Transverse colon (tissue), 4 donors: ENCODE measurements at regions of chr4 and their contacts with region 1.

Region 1: GRCh38 chr4:4256799-4257198 is 8.8 kb upstream of the TMEM128 start:
- DNase-seq: no peak
- H3K4me3 ChIP-seq: no peak overlapping the region
- H3K27ac ChIP-seq: no peak overlapping the region
- H3K4me1 ChIP-seq: peaks cover 0 to 10% (median 0%) of the 10 kb centered on the region in 4 donors
- H3K27me3 ChIP-seq: no peaks in the 10 kb centered on the region
- CTCF ChIP-seq: no peak
- EP300 ChIP-seq: no peak
- POLR2A ChIP-seq: no peak

Region 2: DNA sequence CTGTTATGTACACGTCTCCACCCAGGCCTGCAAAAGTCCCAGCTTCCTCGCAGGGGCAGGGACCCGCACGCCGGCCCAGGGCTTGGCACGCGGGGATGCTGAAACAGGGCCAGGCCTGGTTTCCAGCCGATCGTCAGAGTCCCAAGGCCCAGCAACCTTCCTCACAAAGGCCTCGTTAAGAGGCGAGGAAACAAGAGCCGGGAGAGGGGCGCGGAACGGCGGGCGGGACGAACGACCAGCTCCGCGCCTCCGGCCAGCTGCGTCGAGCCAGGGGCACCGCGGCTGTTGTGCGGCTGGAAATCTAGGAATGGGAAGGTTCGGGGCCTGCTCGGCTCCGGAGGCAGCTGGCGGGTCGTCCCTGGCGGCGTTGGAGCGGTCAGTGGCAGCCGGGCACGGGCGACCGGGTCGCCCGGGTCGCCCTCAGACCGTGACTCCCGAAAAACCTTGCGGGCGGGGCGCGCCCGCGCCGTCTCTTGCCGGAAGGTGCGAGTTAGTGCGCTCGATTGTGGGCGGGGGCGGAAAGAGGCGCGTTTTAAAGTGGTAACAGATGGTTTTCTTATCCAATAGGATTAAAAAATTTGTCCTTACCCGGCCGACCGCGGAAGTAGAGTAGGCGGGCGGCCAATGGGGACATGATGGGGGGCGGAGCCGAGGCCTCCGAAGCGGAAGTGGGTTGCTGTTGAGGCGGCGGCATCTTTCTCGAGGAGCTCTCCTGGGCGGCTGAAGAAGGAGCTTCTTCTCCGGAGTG is 1788.2 kb before region 1 on chr4 and contains the start of gene RNF4:
- in situ Hi-C with region 1: no loop called
- intact Hi-C with region 1: no loop called
- DNase-seq: peak; percentile 98
- H3K4me3 ChIP-seq: peak within 1 kb of the TSS; percentile 81 to 99 (median 96)
- H3K27ac ChIP-seq: peak within 1 kb of the TSS; percentile 97 to 99 (median 98)
- H3K4me1 ChIP-seq: peaks cover 11 to 33% (median 26%) of the 10 kb centered on the region in 4 donors
- H3K27me3 ChIP-seq: no peaks in the 10 kb centered on the region
- CTCF ChIP-seq: peak in 1 of 5 experiments; percentile 8
- EP300 ChIP-seq: no peak
- POLR2A ChIP-seq: peak; percentile 87
- total RNA-seq, gene RNF4: 20.9 to 50.5 (median 35.8) TPM

Region 3: DNA sequence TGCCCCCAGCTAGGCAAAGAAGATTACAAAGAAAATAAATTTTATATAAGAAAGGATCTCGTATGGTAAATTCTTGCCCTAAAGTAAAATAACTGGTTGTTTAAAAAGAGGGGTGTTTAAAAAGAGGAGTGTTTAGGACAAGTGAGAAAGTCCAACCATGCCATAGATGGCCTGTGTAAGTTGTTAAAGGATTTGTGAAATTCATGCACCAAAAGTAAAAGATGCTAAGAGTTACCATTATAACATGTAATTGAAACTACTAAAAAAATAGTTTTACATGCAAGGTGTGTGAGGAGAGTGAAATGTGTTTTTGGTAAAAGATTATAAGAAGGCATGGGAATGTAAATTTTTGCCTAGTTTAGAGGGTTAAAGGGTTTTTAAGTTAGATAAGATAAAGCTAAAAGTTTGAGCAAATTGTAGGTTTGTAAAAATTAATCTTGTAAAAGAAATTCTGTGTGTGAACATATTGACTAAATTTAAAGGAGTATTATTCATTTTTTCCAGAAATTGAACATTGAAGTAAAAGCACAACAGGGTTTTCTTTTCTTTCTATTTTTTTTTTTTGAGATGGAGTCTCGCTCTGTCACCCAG is 1202.5 kb before region 1 on chr4:
- in situ Hi-C with region 1: no loop called
- intact Hi-C with region 1: no loop called
- DNase-seq: no peak
- H3K4me3 ChIP-seq: no peak overlapping the region
- H3K27ac ChIP-seq: no peak overlapping the region
- H3K4me1 ChIP-seq: no peaks in the 10 kb centered on the region
- H3K27me3 ChIP-seq: no peaks in the 10 kb centered on the region
- CTCF ChIP-seq: no peak
- EP300 ChIP-seq: no peak
- POLR2A ChIP-seq: no peak

Region 4: GRCh38 chr4:4170596-4171150 is 86.1 kb before region 1 on chr4:
- in situ Hi-C with region 1: no loop called
- intact Hi-C with region 1: no loop called
- DNase-seq: no peak
- H3K4me3 ChIP-seq: no peak overlapping the region
- H3K27ac ChIP-seq: no peak overlapping the region
- H3K4me1 ChIP-seq: no peaks in the 10 kb centered on the region
- H3K27me3 ChIP-seq: no peaks in the 10 kb centered on the region
- CTCF ChIP-seq: no peak
- EP300 ChIP-seq: no peak
- POLR2A ChIP-seq: no peak

Region 5: DNA sequence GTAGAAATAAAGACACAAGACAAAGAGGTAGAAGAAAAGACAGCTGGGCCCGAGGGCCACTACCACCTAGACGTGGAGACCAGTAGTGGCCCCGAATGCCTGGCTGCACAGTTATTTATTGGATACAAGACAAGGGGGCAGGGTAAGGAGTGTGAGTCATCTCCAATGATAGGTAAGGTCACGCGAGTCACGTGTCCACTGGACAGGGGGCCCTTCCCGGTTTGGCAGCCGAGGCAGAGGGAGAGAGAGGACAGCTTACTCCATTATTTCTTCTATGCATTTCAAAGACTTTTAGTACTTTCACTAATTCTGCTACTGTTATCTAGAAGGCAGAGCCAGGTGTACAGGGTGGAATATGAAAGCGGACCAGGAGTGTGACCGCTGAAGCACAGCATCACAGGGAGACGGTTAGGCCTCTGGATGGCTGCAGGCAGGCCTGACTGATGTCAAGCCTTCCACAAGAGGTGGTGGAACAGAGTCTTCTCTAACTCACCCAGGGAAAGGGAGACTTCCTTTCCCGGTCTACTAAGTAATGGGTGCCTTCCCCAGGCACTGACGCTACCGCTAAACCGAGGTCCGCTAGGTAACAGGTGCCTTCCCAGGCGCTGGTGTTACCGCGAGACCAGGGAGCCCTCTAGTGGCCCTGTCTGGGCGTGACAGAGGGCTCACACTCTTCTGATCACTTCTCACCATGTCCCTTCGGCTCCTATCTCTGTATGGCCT is 78.2 kb after region 1 on chr4:
- in situ Hi-C with region 1: loop called in 3 of 4 experiments (anchors 10 kb)
- intact Hi-C with region 1: no loop called
- DNase-seq: peak; percentile 75
- H3K4me3 ChIP-seq: no peak overlapping the region
- H3K27ac ChIP-seq: no peak overlapping the region
- H3K4me1 ChIP-seq: no peaks in the 10 kb centered on the region
- H3K27me3 ChIP-seq: no peaks in the 10 kb centered on the region
- CTCF ChIP-seq: peak; percentile 52 to 74 (median 67)
- EP300 ChIP-seq: no peak
- POLR2A ChIP-seq: no peak

Region 6: GRCh38 chr4:4344915-4345527 is 88.2 kb after region 1 on chr4:
- in situ Hi-C with region 1: loop called in 1 of 4 experiments (anchors 10 kb)
- intact Hi-C with region 1: no loop called
- DNase-seq: peak; percentile 40
- H3K4me3 ChIP-seq: no peak overlapping the region
- H3K27ac ChIP-seq: no peak overlapping the region
- H3K4me1 ChIP-seq: no peaks in the 10 kb centered on the region
- H3K27me3 ChIP-seq: no peaks in the 10 kb centered on the region
- CTCF ChIP-seq: no peak
- EP300 ChIP-seq: no peak
- POLR2A ChIP-seq: no peak

Region 7: DNA sequence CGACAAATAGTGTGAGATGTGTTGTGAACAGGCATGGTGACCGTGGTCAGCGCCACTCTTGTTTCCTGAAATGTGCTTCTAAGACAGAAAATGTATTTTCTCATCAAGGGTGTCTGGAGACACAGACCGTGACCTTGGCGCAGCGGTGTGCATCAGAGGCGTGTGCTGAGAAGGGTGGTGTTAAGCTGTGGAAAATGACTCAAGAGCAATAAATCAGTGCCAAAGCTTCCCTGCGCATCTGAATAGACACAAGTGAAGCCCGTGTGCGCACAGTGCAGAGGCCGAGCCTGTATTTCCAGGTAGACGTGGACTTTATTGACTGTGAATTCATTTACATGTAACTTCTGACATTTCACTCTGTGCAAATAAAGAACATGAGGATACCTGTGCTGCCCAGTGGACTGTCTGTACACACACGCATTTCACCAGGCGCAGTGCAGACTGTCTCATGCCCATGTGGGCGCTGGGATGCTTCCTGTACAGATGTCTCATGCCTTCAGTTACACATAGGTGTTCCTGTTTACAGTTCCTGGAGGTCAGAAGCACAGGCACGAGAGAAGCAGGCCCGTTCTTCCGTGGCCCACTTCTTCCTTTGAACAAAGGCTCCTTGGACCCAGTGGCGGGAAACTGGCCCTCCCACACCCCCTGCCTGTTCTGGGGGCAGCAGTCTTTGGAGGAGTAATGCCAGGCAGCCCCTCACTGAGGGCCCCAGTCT is 162.0 kb after region 1 on chr4:
- in situ Hi-C with region 1: no loop called
- intact Hi-C with region 1: no loop called
- DNase-seq: no peak
- H3K4me3 ChIP-seq: no peak overlapping the region
- H3K27ac ChIP-seq: no peak overlapping the region
- H3K4me1 ChIP-seq: no peaks in the 10 kb centered on the region
- H3K27me3 ChIP-seq: no peaks in the 10 kb centered on the region
- CTCF ChIP-seq: no peak
- EP300 ChIP-seq: no peak
- POLR2A ChIP-seq: no peak